ENCODE measurements at regions of chr15 and their contacts with region 1.

Region 1: DNA sequence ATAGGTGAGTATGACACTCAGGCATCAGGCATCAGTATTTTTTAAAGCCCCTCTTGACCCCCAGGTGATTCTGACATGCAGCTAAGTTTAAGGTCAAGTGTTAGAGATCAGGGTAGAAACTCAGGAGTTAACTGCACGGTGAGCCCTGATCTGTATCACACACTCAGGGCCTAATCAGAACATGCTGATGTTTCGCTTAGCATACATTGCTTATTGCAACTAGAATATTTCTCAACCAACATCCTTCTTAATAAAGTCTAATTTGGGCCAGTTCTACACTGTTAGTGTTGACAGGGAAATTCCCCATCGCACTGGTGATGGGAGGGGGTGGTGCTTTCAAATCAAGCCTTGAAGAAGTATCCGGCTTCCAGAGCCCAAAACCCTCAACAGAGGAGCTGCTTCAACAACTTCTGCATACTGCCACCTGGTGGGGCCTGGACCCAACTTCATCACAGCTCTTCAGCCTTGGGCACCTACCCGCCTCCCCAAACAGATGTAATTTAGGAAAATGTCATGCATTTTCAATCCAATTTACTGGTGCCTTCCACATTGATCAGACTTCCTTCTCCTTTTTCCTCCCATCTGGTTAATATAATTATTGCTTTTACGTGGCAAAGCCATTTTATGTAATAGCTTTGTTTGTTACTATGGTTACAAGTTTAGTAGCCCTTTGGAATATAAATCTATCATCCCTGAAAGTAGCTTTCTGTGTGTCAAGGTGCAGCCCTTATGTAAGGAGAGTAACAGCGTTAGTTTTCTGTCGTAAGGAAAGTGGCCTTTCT is 312.2 kb downstream of the RORA start:
- DNase-seq: peak; percentile 80
- H3K4me3 Mint-ChIP-seq: no peak overlapping the region
- H3K27ac Mint-ChIP-seq: no peak overlapping the region
- H3K4me1 Mint-ChIP-seq: no peaks in the 10 kb centered on the region
- H3K27me3 Mint-ChIP-seq: no peaks in the 10 kb centered on the region
- CTCF ChIP-seq: peak; percentile 74

Region 2: DNA sequence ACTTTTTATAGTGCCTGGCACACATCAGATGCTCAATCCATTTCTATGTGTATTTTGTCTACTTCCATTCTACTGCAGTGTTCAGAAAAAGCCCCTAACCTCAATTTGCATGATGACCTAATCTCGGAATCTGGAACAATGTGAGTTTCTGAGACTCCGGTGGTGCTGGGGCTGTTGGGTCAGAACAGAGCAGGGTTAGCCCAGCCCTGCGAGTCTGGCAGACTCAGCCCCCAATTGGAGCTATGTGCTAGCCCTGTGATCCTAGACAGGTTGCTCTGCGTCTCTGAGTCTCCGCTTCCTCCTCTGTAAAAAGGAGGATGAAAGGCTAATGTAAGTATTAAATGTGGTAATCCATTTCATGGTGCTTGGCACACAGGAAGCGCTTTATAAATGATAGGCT is 342.9 kb before region 1 on chr15:
- CTCF ChIA-PET with region 1: interaction called, 10 read pairs
- POLR2A ChIA-PET with region 1: no interaction called
- intact Hi-C with region 1: no loop called
- DNase-seq: no peak
- H3K4me3 Mint-ChIP-seq: no peak overlapping the region
- H3K27ac Mint-ChIP-seq: no peak overlapping the region
- H3K4me1 Mint-ChIP-seq: peaks cover 6% of the 10 kb centered on the region
- H3K27me3 Mint-ChIP-seq: no peaks in the 10 kb centered on the region
- CTCF ChIP-seq: no peak

Region 3: DNA sequence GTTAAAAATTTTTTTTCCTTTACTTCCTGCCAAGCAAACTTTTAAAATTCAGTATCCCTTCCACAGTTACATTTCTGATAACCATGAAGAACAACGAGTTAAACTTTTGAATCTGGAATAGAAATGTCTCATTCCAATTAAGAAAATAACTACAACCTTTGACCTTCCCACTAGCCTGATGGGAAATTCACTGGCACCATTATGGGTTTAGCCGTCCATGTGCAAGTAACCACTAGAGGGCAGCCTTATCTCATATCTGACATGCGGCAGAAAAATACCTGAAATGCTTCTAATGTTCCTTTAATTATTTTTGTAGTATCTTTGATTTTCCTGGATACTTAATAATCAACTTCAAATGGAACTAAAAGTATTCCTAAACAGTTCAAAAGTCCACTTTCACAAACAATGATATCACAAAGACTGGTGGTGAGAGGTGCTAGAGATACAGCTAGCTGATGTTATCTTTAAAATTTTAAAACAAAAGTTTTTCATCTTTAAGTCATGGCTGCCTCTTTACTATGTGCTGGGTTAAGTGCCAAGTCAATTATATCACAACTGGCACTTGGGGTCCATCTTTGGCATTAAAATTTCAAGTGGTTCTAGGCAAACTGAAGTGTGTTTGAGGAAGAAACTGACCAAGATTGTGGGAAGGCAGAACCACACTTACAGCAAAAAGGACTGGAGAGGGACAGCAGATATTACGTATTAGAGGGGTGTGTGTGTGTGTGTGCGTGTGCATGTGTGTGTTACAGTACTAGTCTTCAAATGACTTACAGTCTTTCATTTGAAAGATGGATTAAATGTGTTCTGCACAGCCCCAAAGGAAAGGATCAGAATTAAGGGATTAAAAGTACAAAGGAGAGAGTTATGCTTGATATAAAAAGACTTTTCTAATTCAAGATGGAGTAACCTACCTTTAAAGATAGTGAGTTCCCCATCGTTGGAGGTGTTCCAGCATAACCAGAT is 330.8 kb before region 1 on chr15:
- CTCF ChIA-PET with region 1: interaction called, 163 read pairs
- POLR2A ChIA-PET with region 1: interaction called, 13 read pairs
- intact Hi-C with region 1: loop called (anchors 1 kb)
- DNase-seq: peak; percentile 75
- H3K4me3 Mint-ChIP-seq: no peak overlapping the region
- H3K27ac Mint-ChIP-seq: no peak overlapping the region
- H3K4me1 Mint-ChIP-seq: no peaks in the 10 kb centered on the region
- H3K27me3 Mint-ChIP-seq: no peaks in the 10 kb centered on the region
- CTCF ChIP-seq: peak; percentile 84

Region 4: GRCh38 chr15:60592371-60593169 is 324.3 kb before region 1 on chr15:
- CTCF ChIA-PET with region 1: interaction called, 163 read pairs
- POLR2A ChIA-PET with region 1: interaction called, 12 read pairs
- intact Hi-C with region 1: no loop called
- DNase-seq: peak; percentile 66
- H3K4me3 Mint-ChIP-seq: peak overlapping the region; percentile 67
- H3K27ac Mint-ChIP-seq: no peak overlapping the region
- H3K4me1 Mint-ChIP-seq: peaks cover 11% of the 10 kb centered on the region
- H3K27me3 Mint-ChIP-seq: no peaks in the 10 kb centered on the region
- CTCF ChIP-seq: no peak

Region 5: GRCh38 chr15:60905587-60905986 is 11.3 kb before region 1 on chr15:
- CTCF ChIA-PET with region 1: interaction called, 78 read pairs
- POLR2A ChIA-PET with region 1: no interaction called
- intact Hi-C with region 1: no loop called
- DNase-seq: peak; percentile 18
- H3K4me3 Mint-ChIP-seq: no peak overlapping the region
- H3K27ac Mint-ChIP-seq: no peak overlapping the region
- H3K4me1 Mint-ChIP-seq: no peaks in the 10 kb centered on the region
- H3K27me3 Mint-ChIP-seq: peaks cover 12% of the 10 kb centered on the region
- CTCF ChIP-seq: peak; percentile 28

Region 6: DNA sequence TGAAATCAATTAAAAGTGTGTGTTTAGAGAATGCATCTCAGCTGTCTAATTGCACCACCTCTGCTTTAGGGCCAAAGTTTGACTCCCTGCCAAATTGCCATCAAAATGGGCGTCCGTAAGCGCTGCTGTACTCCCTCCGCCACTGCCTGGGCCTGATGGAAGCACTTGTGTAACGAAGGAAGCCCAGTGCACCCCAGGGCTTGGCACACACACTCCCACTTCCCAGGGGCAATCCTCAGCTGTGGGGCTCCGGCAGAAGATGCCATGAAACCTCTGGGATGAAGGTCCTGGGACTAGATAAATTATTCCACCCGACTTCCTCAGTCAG is 174.4 kb after region 1 on chr15:
- CTCF ChIA-PET with region 1: no interaction called
- POLR2A ChIA-PET with region 1: no interaction called
- intact Hi-C with region 1: no loop called
- DNase-seq: no peak
- H3K4me3 Mint-ChIP-seq: no peak overlapping the region
- H3K27ac Mint-ChIP-seq: no peak overlapping the region
- H3K4me1 Mint-ChIP-seq: no peaks in the 10 kb centered on the region
- H3K27me3 Mint-ChIP-seq: peaks cover 12% of the 10 kb centered on the region
- CTCF ChIP-seq: no peak

Measured in MCF 10A (cell line).